ENCODE measurements at regions of chr17 and their contacts with region 1.

Region 1: DNA sequence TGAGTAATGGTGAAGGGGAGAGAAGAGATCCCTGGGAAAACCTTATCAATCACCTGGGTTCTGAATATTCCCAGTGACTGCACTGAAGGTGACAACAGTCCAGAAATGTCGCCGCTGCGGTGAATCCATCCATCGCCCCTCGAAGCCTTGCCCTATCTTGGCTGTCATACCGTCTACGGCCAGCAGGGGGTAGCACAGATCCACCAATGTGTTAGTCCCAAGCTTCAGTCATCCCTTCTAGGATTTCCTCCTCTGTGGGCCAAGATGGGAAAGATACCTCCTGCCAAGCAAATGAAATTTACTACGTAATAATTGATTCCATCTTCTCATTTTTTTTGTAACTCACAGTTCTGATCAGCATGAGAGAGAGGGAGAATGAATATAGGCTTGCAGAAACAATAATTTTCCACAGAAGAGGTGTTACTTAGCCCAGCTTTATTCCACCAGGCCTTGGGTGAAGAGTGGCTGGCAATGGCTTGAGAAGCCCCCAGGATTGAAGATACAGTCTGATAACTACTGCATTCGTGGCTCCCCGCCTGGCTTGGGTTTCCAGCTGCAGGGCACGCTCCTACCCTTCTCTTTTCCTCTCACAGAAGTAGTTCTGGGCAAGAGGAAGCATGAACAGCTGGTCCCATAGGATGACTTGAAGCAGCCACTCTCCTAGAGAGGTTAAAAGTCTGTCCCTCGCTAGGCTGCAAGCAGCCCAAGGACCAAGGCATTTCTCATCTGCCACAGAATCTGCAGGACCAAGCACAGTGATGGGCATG is 2.6 kb upstream of the FMNL1 start:
- DNase-seq: peak; percentile 74
- H3K4me3 ChIP-seq: no peak overlapping the region
- H3K27ac ChIP-seq: no peak overlapping the region
- H3K4me1 ChIP-seq: no peaks in the 10 kb centered on the region
- H3K27me3 ChIP-seq: peaks cover 9 to 21% of the 10 kb centered on the region in 2 experiments
- CTCF ChIP-seq: peak; percentile 86 to 92
- POLR2A ChIP-seq: no peak

Region 2: GRCh38 chr17:45197555-45198334 is 21.3 kb before region 1 on chr17:
- CTCF ChIA-PET with region 1: interaction called, 12 read pairs
- POLR2A ChIA-PET with region 1: no interaction called
- dilution Hi-C with region 1: no loop called
- intact Hi-C with region 1: no loop called
- DNase-seq: peak; percentile 86
- H3K4me3 ChIP-seq: no peak overlapping the region
- H3K27ac ChIP-seq: no peak overlapping the region
- H3K4me1 ChIP-seq: peaks cover 2% of the 10 kb centered on the region
- H3K27me3 ChIP-seq: no peaks in the 10 kb centered on the region
- CTCF ChIP-seq: peak; percentile 99 to 100
- POLR2A ChIP-seq: no peak

Region 3: DNA sequence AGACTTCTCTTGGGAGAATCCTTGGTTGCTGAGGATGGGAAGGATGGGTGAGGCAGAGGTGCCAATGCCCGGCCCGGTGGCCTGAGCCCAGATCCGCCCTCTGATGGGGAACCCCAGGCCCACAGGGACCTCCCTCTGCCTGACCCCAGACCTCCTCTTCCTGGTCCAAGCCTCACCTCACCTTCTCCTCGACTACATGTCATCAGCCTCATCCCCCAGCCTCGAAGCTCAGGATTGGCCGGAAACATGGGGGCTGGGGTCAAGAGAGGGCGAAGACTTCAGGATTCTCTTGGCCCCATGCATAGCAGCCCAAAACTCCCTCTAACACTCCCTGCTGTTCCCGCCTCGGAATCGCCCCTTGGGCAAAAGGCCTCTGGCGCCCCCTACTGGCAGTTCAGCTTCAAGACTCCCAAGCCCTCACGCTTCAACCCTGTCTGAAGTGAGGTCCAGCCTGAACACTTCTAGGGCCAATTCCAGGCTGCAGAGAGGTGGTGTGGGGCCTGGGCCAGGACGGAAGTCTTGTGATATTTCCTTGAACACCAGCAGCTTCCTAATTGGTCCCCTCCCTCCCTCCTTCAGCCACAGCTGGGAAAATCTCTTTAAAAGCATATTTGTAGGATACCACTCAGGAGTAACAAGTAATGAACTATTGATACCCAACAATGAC is 166.4 kb after region 1 on chr17:
- CTCF ChIA-PET with region 1: interaction called, 107 read pairs
- POLR2A ChIA-PET with region 1: interaction called, 8 read pairs
- dilution Hi-C with region 1: no loop called
- intact Hi-C with region 1: loop called (anchors 1 kb)
- DNase-seq: peak; percentile 77
- H3K4me3 ChIP-seq: no peak overlapping the region
- H3K27ac ChIP-seq: no peak overlapping the region
- H3K4me1 ChIP-seq: no peaks in the 10 kb centered on the region
- H3K27me3 ChIP-seq: peaks cover 0 to 6% of the 10 kb centered on the region in 2 experiments
- CTCF ChIP-seq: peak; percentile 94 to 97
- POLR2A ChIP-seq: no peak

Region 4: GRCh38 chr17:45428050-45428617 is 209.1 kb after region 1 on chr17:
- CTCF ChIA-PET with region 1: interaction called, 22 read pairs
- POLR2A ChIA-PET with region 1: no interaction called
- dilution Hi-C with region 1: no loop called
- intact Hi-C with region 1: loop called (anchors 2 kb)
- DNase-seq: peak; percentile 65
- H3K4me3 ChIP-seq: no peak overlapping the region
- H3K27ac ChIP-seq: no peak overlapping the region
- H3K4me1 ChIP-seq: peaks cover under 1% of the 10 kb centered on the region
- H3K27me3 ChIP-seq: no peaks in the 10 kb centered on the region
- CTCF ChIP-seq: peak; percentile 91 to 97
- POLR2A ChIP-seq: no peak

Region 5: GRCh38 chr17:45828628-45829027 is 609.5 kb after region 1 on chr17:
- CTCF ChIA-PET with region 1: interaction called, 24 read pairs
- POLR2A ChIA-PET with region 1: no interaction called
- dilution Hi-C with region 1: no loop called
- intact Hi-C with region 1: no loop called
- DNase-seq: no peak
- H3K4me3 ChIP-seq: no peak overlapping the region
- H3K27ac ChIP-seq: no peak overlapping the region
- H3K4me1 ChIP-seq: no peaks in the 10 kb centered on the region
- H3K27me3 ChIP-seq: no peaks in the 10 kb centered on the region
- CTCF ChIP-seq: no peak
- POLR2A ChIP-seq: no peak

Measured in endothelial cell of umbilical vein (primary cell).